Breast epithelium (tissue), 4 donors: ENCODE measurements at regions of chrX and their contacts with region 1.

Region 1: GRCh38 chrX:24156177-24156576 is 6.6 kb downstream of the ZFX start:
- DNase-seq: no peak
- H3K4me3 ChIP-seq: no peak overlapping the region
- H3K27ac ChIP-seq: no peak overlapping the region
- H3K4me1 ChIP-seq: peaks cover 0 to 13% of the 10 kb centered on the region in 2 donors
- H3K27me3 ChIP-seq: no peaks in the 10 kb centered on the region
- CTCF ChIP-seq: no peak
- POLR2A ChIP-seq: no peak

Region 2: GRCh38 chrX:24225265-24225664 is 69.1 kb after region 1 on chrX:
- intact Hi-C with region 1: loop called (anchors 2 kb)
- DNase-seq: no peak
- H3K4me3 ChIP-seq: no peak overlapping the region
- H3K27ac ChIP-seq: no peak overlapping the region
- H3K4me1 ChIP-seq: no peaks in the 10 kb centered on the region
- H3K27me3 ChIP-seq: no peaks in the 10 kb centered on the region
- CTCF ChIP-seq: no peak
- POLR2A ChIP-seq: no peak